PC-9 (cell line): ENCODE measurements at regions of chr19 and their contacts with region 1.

Region 1: GRCh38 chr19:10946964-10947657 is 13.7 kb upstream of the SMARCA4 start:
- DNase-seq: peak in 1 of 2 experiments; percentile 75
- H3K4me3 ChIP-seq: no peak overlapping the region
- H3K27ac ChIP-seq: peak overlapping the region; percentile 43
- H3K4me1 ChIP-seq: peaks cover 20% of the 10 kb centered on the region
- H3K27me3 ChIP-seq: no peaks in the 10 kb centered on the region
- CTCF ChIP-seq: no peak

Region 2: GRCh38 chr19:10979951-10980381 is 32.9 kb after region 1 on chr19:
- CTCF ChIA-PET with region 1: no interaction called
- POLR2A ChIA-PET with region 1: interaction called, 14 read pairs
- intact Hi-C with region 1: no loop called
- DNase-seq: no peak
- H3K4me3 ChIP-seq: no peak overlapping the region
- H3K27ac ChIP-seq: no peak overlapping the region
- H3K4me1 ChIP-seq: no peaks in the 10 kb centered on the region
- H3K27me3 ChIP-seq: no peaks in the 10 kb centered on the region
- CTCF ChIP-seq: no peak

Region 3: DNA sequence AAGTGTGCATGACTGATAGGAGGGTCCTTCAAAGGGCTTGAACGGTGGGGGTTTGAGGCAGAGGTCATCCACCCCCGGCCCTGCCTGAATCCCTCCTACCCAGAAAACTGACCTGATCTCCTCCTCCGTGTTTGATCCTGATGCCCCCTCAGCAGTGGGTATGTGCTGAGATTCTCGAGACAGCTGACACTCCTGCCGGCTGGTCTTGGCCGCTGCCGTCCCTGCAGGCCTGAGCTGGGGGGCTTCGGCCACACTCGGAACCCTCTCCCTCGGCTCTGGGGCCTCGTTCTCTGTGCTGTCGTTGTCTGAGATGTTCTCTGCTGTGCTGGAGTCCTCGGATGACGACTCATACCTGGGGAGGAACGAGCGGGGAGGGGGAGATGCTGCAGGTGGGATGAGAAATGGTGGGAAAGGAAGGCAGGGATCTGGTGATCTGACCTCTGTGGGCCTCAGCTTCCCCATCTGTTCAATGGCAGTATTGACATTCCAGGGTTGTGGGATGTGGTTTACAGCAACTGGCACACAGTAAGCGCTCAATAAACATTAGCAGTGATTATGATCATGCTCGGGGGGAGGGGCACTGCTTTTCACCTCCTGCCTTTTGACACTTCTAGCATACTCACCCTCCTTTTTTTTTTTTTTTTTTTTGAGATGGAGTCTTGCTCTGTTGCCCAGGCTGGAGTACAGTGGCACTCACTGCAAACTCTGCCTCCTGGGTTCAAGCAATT is 229.5 kb after region 1 on chr19:
- CTCF ChIA-PET with region 1: no interaction called
- POLR2A ChIA-PET with region 1: interaction called, 27 read pairs
- intact Hi-C with region 1: no loop called
- DNase-seq: no peak
- H3K4me3 ChIP-seq: no peak overlapping the region
- H3K27ac ChIP-seq: no peak overlapping the region
- H3K4me1 ChIP-seq: no peaks in the 10 kb centered on the region
- H3K27me3 ChIP-seq: no peaks in the 10 kb centered on the region
- CTCF ChIP-seq: no peak